GM10248 (cell line): ENCODE measurements at regions of chr2 and their contacts with region 1.

Region 1: DNA sequence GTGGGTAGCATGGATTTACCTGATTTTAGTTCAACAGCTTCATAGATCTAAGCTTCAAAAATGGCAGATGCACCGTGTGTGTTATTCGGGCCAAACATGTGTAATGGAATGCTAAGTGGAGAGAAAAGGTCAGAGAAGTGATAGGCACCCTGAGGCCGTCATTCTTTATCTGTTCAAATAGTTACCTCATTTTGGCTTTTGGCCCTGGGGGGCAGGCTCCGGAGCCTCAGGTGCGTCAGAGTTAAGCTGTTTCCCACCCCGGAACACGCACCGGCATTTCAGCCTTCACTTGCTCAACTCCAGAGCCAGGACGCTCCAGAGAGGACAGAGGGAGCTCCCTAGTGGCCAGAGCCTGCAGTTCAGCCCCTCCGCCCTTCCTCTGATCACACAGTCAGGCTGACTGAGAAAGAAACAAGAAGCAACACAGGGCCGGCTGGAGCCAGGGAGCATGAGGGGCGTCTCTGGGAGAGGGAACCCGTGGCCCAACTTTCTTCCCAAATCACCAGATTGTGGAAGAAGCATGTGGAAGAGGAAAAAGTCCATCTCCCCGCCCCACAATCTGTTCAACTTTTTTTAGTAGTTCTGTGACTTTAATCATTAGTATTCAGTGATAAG is 135.2 kb upstream of the EPC2 start:
- DNase-seq: peak; percentile 87
- CTCF ChIP-seq: peak; percentile 95

Region 2: DNA sequence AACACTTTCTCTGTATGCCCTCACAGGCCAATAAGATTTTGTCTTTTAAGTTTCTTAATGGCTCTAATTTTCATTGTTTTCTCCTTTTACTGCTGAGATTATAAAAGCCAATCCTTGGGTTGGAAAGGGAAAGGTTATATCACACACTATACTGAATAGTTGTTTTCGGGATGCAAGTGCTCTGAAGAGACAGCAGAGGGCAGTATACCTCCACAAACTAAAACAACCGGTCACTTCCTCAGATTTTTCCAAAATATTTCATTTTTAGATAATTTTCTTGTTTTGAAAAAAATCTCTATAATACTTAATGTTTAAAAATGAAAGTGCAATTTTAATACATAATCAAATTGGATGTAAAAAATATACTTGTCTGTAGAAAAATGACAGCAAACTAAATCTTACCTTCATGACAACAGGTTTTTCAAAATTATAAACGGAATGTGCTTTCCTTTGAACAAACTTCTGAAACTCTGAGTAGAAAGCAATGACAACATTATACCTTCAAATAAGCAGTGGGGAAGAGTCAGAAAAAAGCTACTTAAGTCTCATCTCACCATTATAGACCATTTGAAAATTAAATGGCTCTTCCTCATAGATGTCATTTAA is 571.5 kb before region 1 on chr2:
- CTCF ChIA-PET with region 1: interaction called, 27 read pairs
- POLR2A ChIA-PET with region 1: no interaction called
- DNase-seq: peak; percentile 5
- CTCF ChIP-seq: peak; percentile 72

Region 3: DNA sequence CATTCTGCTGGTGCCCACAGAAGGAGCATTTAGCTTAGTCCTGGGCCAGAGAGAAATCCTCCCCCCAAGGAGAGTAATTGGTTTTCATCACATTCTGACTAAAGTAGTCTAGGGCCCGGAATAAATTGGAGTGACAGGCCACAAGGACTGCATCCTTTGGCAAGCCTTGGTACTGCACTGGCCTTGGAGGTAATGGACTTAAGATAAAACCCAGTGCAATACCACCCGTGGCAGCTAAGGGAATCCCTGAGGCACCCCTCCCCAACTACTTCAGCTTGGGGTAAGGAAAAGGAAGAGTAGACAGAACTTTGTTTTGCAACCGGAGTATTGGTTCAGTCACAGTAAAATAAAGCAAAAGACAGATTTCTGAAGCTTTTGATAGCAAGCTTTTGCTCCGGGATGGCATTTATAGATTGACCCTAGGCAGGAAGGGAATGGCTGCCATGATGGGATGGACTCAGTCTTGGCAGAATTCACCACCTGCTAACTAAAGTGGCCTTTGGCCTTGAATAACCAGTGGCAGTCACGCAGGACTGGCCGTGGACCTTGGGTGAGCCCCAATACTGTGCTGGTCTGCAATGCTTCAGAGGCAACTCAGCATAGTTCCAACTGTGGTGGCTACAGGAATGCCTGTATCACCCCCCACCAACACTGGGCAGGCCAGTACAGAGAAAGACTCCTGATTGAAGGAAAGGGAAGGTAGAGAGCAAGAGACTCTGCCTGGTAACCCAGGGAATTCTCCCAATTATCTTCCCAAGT is 503.0 kb before region 1 on chr2:
- CTCF ChIA-PET with region 1: no interaction called
- POLR2A ChIA-PET with region 1: no interaction called
- DNase-seq: no peak
- CTCF ChIP-seq: no peak

Region 4: GRCh38 chr2:148484066-148484465 is 25.3 kb before region 1 on chr2:
- CTCF ChIA-PET with region 1: interaction called, 15 read pairs
- POLR2A ChIA-PET with region 1: no interaction called
- DNase-seq: no peak
- CTCF ChIP-seq: no peak

Region 5: DNA sequence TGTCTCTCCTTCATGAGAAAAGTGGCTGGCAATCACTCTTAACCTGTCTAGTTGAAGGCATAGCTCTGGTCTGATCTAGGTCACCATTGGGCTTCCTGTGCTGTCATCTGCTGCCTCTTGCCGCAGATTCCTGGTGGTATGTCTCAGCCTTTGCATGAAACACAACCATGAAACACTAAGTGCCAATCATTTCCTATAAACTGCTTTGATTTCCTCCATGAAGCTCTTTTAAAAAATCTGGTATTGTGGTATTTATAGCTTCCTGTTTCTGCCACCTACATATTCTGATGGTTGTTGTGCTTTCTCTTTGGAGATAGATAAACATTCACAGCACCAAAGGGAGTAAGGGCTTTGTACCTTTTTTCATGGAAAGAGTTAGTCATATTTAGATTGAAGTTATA is 15.1 kb after region 1 on chr2:
- CTCF ChIA-PET with region 1: interaction called, 27 read pairs
- POLR2A ChIA-PET with region 1: no interaction called
- DNase-seq: no peak
- CTCF ChIP-seq: no peak

Region 6: GRCh38 chr2:148552675-148553331 is 43.4 kb after region 1 on chr2:
- CTCF ChIA-PET with region 1: interaction called, 12 read pairs
- POLR2A ChIA-PET with region 1: no interaction called
- DNase-seq: no peak
- CTCF ChIP-seq: no peak